Transverse colon (tissue), 4 donors: ENCODE measurements at regions of chr4 and their contacts with region 1.

Region 1: GRCh38 chr4:88514557-88515511 is 8.7 kb downstream of the PYURF start:
- DNase-seq: no peak
- H3K4me3 ChIP-seq: no peak overlapping the region
- H3K27ac ChIP-seq: no peak overlapping the region
- H3K4me1 ChIP-seq: peaks cover 0 to 6% (median 0%) of the 10 kb centered on the region in 4 donors
- H3K27me3 ChIP-seq: no peaks in the 10 kb centered on the region
- CTCF ChIP-seq: no peak
- EP300 ChIP-seq: no peak
- POLR2A ChIP-seq: no peak

Region 2: DNA sequence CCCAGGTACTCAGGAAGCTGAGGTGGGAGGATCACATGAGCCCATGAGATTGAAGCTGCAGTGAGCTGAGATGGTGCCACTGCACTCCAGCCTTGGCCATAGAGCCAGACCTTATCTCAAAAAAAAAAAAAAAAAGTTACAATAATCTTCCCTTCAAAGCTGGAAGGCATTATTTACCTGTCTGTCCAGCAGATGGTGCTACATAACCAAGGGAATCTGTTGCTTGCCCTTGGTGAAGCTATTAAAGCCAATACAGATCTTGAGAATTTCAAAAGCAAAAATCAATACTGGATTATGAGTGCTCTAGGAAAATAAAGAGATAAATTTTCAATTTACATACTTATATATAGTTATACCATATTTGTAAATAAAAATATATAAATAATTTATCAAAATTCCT is 481.5 kb before region 1 on chr4:
- in situ Hi-C with region 1: loop called (anchors 10 to 25 kb)
- intact Hi-C with region 1: no loop called
- DNase-seq: peak; percentile 25
- H3K4me3 ChIP-seq: no peak overlapping the region
- H3K27ac ChIP-seq: no peak overlapping the region
- H3K4me1 ChIP-seq: peaks cover 0 to 3% (median 0%) of the 10 kb centered on the region in 4 donors
- H3K27me3 ChIP-seq: no peaks in the 10 kb centered on the region
- CTCF ChIP-seq: peak; percentile 63 to 70 (median 65)
- EP300 ChIP-seq: no peak
- POLR2A ChIP-seq: no peak

Region 3: GRCh38 chr4:88211473-88212252 is 303.2 kb before region 1 on chr4:
- in situ Hi-C with region 1: loop called in 2 of 4 experiments (anchors 5 kb)
- intact Hi-C with region 1: no loop called
- DNase-seq: peak; percentile 20
- H3K4me3 ChIP-seq: no peak overlapping the region
- H3K27ac ChIP-seq: no peak overlapping the region
- H3K4me1 ChIP-seq: peaks cover 0 to 3% (median 0%) of the 10 kb centered on the region in 4 donors
- H3K27me3 ChIP-seq: no peaks in the 10 kb centered on the region
- CTCF ChIP-seq: peak; percentile 68 to 80 (median 74)
- EP300 ChIP-seq: no peak
- POLR2A ChIP-seq: no peak

Region 4: GRCh38 chr4:88225232-88226105 is 289.4 kb before region 1 on chr4:
- in situ Hi-C with region 1: loop called in 2 of 4 experiments (anchors 5 kb)
- intact Hi-C with region 1: loop called (anchors 2 kb)
- DNase-seq: no peak
- H3K4me3 ChIP-seq: no peak overlapping the region
- H3K27ac ChIP-seq: no peak overlapping the region
- H3K4me1 ChIP-seq: peaks cover 0 to 2% (median under 1%) of the 10 kb centered on the region in 4 donors
- H3K27me3 ChIP-seq: no peaks in the 10 kb centered on the region
- CTCF ChIP-seq: no peak
- EP300 ChIP-seq: no peak
- POLR2A ChIP-seq: no peak

Region 5: DNA sequence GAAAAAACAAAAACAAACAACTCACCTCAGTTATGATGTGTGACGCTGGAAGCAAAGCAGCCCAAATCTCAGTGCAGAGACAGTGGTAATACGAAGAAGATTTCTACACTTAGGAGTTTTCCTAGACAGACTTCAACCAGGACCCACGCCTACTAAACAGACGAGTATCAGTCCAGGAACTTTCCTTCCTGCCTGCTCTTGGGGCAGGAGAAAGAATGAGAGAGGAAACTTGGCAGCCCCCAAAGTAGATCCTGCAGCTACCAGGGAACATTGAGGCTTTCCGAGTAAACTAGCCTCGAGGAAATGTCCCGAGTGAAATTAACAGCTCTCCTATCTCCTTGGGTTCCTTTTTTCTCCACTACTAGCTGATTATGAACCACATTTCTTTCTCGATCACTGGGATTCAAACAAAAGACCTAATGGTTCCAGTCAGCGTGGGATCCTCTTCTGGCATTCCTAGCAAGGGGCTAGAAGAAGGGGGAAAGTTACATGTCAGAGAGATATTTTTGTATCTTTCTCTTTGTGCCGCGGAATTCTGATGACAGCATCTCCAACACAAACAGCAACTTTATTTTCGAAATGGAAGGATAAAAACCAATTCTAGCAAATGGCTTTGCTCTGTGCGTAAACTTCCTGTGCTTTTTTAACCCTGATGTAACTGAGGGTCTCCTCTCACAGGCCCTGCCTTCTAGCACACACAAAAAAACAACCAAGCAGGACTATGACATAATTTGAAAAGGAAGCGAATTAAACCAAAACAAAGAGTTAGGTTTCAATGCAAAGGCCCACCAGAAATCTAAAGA is 283.7 kb before region 1 on chr4:
- in situ Hi-C with region 1: loop called in 1 of 4 experiments (anchors 5 kb)
- intact Hi-C with region 1: no loop called
- DNase-seq: no peak
- H3K4me3 ChIP-seq: peak overlapping the region in 1 of 4 donors; percentile 31
- H3K27ac ChIP-seq: peak overlapping the region in 3 of 4 donors; percentile 63 to 67 (median 67)
- H3K4me1 ChIP-seq: peaks cover 0 to 4% (median 2%) of the 10 kb centered on the region in 4 donors
- H3K27me3 ChIP-seq: no peaks in the 10 kb centered on the region
- CTCF ChIP-seq: no peak
- EP300 ChIP-seq: no peak
- POLR2A ChIP-seq: no peak

Region 6: GRCh38 chr4:88378691-88379559 is 135.9 kb before region 1 on chr4 and contains the start of gene HERC6:
- in situ Hi-C with region 1: loop called (anchors 10 to 25 kb)
- intact Hi-C with region 1: no loop called
- DNase-seq: peak; percentile 83
- H3K4me3 ChIP-seq: peak within 1 kb of the TSS; percentile 76 to 97 (median 80)
- H3K27ac ChIP-seq: peak within 1 kb of the TSS; percentile 89 to 96 (median 92)
- H3K4me1 ChIP-seq: peaks cover 0 to 4% (median 0%) of the 10 kb centered on the region in 4 donors
- H3K27me3 ChIP-seq: no peaks in the 10 kb centered on the region
- CTCF ChIP-seq: peak; percentile 69 to 94 (median 79)
- EP300 ChIP-seq: no peak
- POLR2A ChIP-seq: peak; percentile 21
- total RNA-seq, gene HERC6: 3.2 to 15.2 (median 5.8) TPM

Region 7: DNA sequence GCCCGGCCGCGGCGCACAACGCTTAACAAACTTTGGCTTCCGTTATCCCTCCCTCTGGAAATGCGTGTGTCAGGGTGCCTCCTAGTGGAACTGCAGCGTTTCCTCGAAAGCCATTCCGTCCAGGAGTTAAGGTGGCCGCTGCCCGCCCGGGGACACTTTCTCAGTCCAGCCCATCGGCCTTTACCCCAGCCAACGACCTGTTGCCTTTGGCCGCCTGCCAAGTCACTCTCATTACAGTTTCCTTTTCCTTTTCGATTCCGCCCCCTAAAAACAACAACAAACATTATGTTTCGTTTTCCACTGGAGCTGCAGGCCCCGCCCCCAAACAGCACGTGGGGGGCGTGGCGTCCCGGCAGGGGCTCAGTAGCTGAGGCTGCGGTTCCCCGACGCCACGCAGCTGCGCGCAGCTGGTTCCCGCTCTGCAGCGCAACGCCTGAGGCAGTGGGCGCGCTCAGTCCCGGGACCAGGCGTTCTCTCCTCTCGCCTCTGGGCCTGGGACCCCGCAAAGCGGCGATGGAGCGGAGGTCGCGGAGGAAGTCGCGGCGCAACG is 58.0 kb before region 1 on chr4 and contains the start of gene HERC5:
- in situ Hi-C with region 1: no loop called
- intact Hi-C with region 1: loop called (anchors 10 kb)
- DNase-seq: peak; percentile 94
- H3K4me3 ChIP-seq: peak within 1 kb of the TSS; percentile 49 to 73 (median 57)
- H3K27ac ChIP-seq: peak within 1 kb of the TSS; percentile 84 to 86 (median 85)
- H3K4me1 ChIP-seq: peaks cover 0 to 13% (median 8%) of the 10 kb centered on the region in 4 donors
- H3K27me3 ChIP-seq: peaks cover 11% of the 10 kb centered on the region
- CTCF ChIP-seq: peak; percentile 54 to 75 (median 66)
- EP300 ChIP-seq: no peak
- POLR2A ChIP-seq: peak; percentile 62
- total RNA-seq, gene HERC5: 1.5 to 4.0 (median 1.5) TPM in 3 of 4 donors, not detected in the other

Region 8: GRCh38 chr4:88953400-88953799 is 438.6 kb after region 1 on chr4:
- in situ Hi-C with region 1: no loop called
- intact Hi-C with region 1: no loop called
- DNase-seq: no peak
- H3K4me3 ChIP-seq: no peak overlapping the region
- H3K27ac ChIP-seq: no peak overlapping the region
- H3K4me1 ChIP-seq: peaks cover 0 to 22% (median 5%) of the 10 kb centered on the region in 4 donors
- H3K27me3 ChIP-seq: no peaks in the 10 kb centered on the region
- CTCF ChIP-seq: no peak
- EP300 ChIP-seq: no peak
- POLR2A ChIP-seq: no peak